GM10248 (cell line): ENCODE measurements at regions of chr13 and their contacts with region 1.

Region 1: GRCh38 chr13:41974235-41974900 is 13.5 kb upstream of the VWA8 start:
- DNase-seq: no peak
- CTCF ChIP-seq: no peak

Region 2: DNA sequence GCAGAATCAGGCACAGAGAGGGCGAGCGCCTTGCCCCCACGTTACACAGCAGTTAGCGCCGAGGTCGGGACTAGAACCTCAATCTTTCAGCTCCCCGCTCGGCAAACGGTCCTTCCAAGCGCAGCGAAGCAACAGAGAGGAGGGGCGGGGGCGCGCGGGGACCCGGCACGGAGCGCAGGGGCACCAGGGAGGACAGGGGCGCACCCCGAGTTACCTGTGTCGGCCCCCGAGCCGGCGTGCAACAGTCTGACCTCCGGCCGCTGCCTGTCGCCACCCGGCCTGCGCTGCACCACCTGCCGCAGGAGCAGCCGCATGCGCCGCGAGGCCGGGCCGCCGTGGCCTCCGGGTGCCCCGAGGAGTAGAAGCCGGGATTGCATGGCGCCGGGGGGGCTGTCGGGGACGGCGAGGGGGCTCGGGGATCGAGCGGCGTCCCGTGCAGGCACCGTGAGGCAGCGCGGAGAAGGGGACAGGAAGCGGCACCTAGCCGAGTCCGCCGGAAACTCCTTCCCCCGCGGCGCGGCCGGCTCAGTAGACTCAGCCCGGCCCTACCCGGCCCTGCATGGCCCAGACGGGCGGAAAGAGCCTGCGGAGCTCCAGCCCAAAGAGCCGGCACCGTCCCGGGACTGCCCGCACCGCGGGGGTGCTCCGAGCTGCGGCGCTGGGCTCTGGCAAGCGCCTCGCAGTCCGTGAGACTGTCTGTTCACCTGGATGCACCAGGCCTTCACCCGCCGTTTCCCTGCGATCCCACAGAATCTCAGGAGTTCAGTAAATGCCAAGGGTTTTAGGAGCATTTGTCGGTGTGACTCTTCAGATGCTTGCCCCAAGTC is 13.5 kb before region 1 on chr13 and contains the start of gene VWA8:
- CTCF ChIA-PET with region 1: interaction called, 10 read pairs
- POLR2A ChIA-PET with region 1: no interaction called
- DNase-seq: peak; percentile 89
- CTCF ChIP-seq: no peak

Region 3: DNA sequence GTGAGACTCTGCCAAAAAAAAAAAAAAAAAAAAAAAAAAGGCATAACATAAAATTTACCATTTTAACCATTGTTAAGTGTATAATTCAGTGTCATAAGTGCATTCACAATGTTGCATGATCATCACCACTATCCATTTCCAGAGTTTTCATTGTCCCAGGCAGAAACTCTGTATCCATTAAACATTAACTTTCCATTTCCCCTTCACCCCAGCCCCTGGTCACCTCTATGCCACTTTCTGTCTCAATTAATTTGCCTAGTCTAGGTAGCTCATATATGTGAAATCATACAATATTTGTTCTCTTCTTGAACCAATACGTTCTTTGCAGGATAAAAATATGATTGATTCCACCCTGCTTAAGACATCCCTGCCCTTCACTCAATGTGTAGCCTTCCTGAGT is 17.6 kb after region 1 on chr13:
- CTCF ChIA-PET with region 1: interaction called, 10 read pairs
- POLR2A ChIA-PET with region 1: no interaction called
- DNase-seq: no peak
- CTCF ChIP-seq: no peak